ENCODE measurements at regions of chr14 and their contacts with region 1.

Region 1: DNA sequence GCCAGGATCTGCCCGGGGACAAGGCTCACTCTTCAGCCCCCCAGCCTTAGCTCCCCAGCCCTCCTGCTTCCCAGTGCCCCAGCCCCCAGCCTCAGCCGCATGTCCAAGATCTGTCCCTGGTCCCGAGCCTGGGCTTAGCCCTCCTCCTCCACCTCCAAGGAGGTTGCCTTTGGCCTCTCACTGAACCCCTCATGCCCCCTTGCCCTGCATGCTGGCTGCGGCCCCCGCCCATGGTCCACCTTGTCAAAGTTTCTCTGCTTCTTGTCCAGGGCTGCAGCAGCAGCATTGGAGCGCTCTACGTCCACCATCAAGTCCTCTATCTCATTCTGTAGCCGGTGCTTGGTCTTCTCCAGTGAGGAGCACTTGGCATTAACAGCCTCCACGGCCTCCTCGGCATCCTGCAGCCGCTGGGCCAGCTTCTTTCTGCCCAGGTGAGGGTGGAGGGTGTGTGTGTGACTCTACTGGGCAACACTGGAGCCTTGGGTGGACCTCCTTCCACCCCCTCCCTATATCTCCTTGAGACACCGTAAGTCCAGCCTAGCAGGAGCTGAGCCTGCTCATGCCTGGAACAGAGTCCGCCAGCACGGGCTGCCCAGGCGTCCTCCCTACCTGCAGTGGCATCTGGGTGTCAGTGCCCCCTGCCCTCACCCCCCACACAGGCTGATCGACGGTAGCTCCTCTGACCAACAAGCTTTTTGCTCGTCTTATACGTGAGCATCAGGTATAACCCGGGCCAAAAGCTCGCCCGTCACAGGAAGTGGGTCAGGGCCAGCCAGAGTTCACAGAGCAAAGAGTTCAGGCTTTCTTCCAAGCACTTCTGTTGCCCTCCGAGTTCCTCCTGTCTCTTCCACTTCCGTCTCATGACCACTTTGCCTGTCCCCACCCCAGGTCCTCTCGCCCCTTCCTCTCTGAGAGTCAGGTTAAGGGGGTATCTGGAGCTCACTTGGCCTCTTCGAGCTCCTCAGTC is 11.4 kb downstream of the CMTM5 start:
- DNase-seq: no peak
- H3K4me3 ChIP-seq: no peak overlapping the region
- H3K27ac ChIP-seq: no peak overlapping the region
- H3K4me1 ChIP-seq: no peaks in the 10 kb centered on the region
- H3K27me3 ChIP-seq: peaks cover 80% of the 10 kb centered on the region
- CTCF ChIP-seq: no peak

Region 2: DNA sequence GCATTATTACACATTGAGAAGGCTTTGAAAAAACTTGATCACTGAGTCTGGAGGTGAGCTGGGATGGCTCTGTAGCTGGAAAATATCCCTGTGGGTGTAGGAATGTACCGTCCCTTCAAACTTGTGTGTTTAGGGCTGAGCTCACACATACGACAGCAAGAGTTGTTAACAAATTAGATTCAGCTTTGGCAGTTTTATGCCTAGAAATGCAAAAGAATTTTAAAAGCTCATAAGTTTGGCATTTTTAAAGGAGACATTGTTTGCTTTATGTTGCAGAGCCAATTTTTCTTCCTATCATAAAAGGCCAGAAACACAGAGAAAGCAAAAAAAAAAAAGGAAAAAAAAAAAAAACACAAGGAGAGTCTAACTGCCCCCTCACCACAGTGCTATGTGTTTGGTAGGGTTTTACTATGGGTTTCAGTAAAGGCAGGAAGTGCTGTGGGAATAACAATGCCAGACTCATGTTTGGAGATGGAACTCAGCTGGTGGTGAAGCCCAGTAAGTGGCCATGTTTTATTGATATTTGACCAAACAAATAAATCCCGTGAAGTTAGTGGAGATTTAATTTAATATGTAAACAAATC is 877.6 kb before region 1 on chr14:
- CTCF ChIA-PET with region 1: interaction called, 11 read pairs
- POLR2A ChIA-PET with region 1: no interaction called
- intact Hi-C with region 1: no loop called
- DNase-seq: no peak
- H3K4me3 ChIP-seq: no peak overlapping the region
- H3K27ac ChIP-seq: no peak overlapping the region
- H3K4me1 ChIP-seq: no peaks in the 10 kb centered on the region
- H3K27me3 ChIP-seq: no peaks in the 10 kb centered on the region
- CTCF ChIP-seq: no peak

Region 3: GRCh38 chr14:23174276-23175184 is 213.7 kb before region 1 on chr14:
- CTCF ChIA-PET with region 1: no interaction called
- POLR2A ChIA-PET with region 1: no interaction called
- intact Hi-C with region 1: no loop called
- DNase-seq: no peak
- H3K4me3 ChIP-seq: no peak overlapping the region
- H3K27ac ChIP-seq: no peak overlapping the region
- H3K4me1 ChIP-seq: peaks cover 5% of the 10 kb centered on the region; the same call in 1 of the 2 replicates
- H3K27me3 ChIP-seq: no peaks in the 10 kb centered on the region
- CTCF ChIP-seq: no peak